OCI-LY7 (cell line): ENCODE measurements at regions of chr3 and their contacts with region 1.

Region 1: DNA sequence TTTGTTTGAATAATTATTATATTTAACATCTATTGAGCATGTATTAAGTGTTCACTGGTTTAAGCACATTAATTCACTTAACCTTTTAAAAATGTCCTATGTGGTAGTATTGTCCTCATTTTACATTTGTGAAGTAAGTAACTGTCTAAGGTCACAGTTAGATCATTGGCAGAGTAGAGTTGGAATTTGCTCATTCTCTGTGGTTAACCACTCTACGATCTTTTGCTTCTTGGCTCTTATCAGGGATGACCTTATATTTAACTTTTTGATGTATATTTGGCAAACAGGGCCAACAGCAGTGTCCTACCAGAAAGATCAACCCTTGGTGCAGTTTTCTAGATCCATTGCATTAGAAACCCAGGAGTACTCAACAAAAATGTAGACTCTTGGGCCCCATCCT is 34.0 kb downstream of the PXK start:
- DNase-seq: no peak
- H3K4me3 ChIP-seq: no peak overlapping the region
- H3K27ac ChIP-seq: no peak overlapping the region
- H3K4me1 ChIP-seq: peaks cover 19% of the 10 kb centered on the region
- CTCF ChIP-seq: no peak

Region 2: GRCh38 chr3:58349792-58350626 is 16.7 kb before region 1 on chr3:
- CTCF ChIA-PET with region 1: no interaction called
- POLR2A ChIA-PET with region 1: interaction called, 19 read pairs
- intact Hi-C with region 1: no loop called
- DNase-seq: peak; percentile 98
- H3K4me3 ChIP-seq: peak overlapping the region; percentile 62
- H3K27ac ChIP-seq: peak overlapping the region; percentile 99
- H3K4me1 ChIP-seq: peaks cover 98% of the 10 kb centered on the region
- CTCF ChIP-seq: no peak